B cell (primary cell): ENCODE measurements at regions of chr7 and their contacts with region 1.

Region 1: GRCh38 chr7:143299840-143300239 is 11.7 kb downstream of the CASP2 start:
- DNase-seq: peak; percentile 49
- ATAC-seq: peak; percentile 73
- H3K4me3 ChIP-seq: no peak overlapping the region
- H3K4me3 Mint-ChIP-seq: no peak overlapping the region
- H3K27ac ChIP-seq: no peak overlapping the region
- H3K27ac Mint-ChIP-seq: no peak overlapping the region
- H3K4me1 ChIP-seq: peaks cover 3 to 4% of the 10 kb centered on the region in 2 donors
- H3K4me1 Mint-ChIP-seq: peaks cover 30% of the 10 kb centered on the region
- H3K27me3 ChIP-seq: no peaks in the 10 kb centered on the region
- H3K27me3 Mint-ChIP-seq: no peaks in the 10 kb centered on the region
- CTCF ChIP-seq: peak; percentile 69

Region 2: GRCh38 chr7:142053988-142054387 is 1245.9 kb before region 1 on chr7:
- CTCF ChIA-PET with region 1: no interaction called
- POLR2A ChIA-PET with region 1: no interaction called
- intact Hi-C with region 1: no loop called
- DNase-seq: no peak
- ATAC-seq: no peak
- H3K4me3 ChIP-seq: no peak overlapping the region
- H3K4me3 Mint-ChIP-seq: no peak overlapping the region
- H3K27ac ChIP-seq: no peak overlapping the region
- H3K27ac Mint-ChIP-seq: no peak overlapping the region
- H3K4me1 ChIP-seq: no peaks in the 10 kb centered on the region
- H3K4me1 Mint-ChIP-seq: no peaks in the 10 kb centered on the region
- H3K27me3 ChIP-seq: no peaks in the 10 kb centered on the region
- H3K27me3 Mint-ChIP-seq: peaks cover 9% of the 10 kb centered on the region
- CTCF ChIP-seq: no peak

Region 3: DNA sequence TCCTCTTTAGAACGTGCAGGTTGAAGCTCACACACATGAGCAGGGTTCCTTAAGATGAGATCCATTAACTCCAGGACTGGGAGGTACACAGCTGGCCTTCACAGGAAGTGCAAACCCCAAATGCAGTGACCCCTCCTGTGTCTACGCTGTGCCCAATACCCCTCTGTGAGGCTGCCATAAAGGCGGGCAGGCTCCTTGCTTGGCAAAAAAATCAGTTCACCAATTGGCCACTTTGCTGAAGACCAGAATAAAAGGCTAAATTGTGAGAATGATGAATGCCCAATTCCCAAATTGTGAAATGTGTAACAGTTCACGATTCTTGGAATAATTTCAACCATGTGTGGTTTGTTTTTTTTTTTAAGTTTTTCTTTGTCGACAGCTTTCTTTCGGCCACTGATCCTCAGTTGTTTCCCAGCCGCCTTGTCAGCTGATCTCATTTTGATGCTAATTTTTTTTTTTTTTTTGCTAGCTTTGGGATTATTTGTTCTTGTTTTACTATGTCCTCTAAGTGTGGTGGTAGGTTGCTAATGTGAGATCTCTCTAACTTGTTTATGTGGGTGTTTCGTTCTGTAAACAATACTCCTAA is 940.1 kb before region 1 on chr7:
- CTCF ChIA-PET with region 1: no interaction called
- POLR2A ChIA-PET with region 1: no interaction called
- intact Hi-C with region 1: no loop called
- DNase-seq: no peak
- ATAC-seq: no peak
- H3K4me3 ChIP-seq: no peak overlapping the region
- H3K4me3 Mint-ChIP-seq: no peak overlapping the region
- H3K27ac ChIP-seq: no peak overlapping the region
- H3K27ac Mint-ChIP-seq: no peak overlapping the region
- H3K4me1 ChIP-seq: no peaks in the 10 kb centered on the region
- H3K4me1 Mint-ChIP-seq: no peaks in the 10 kb centered on the region
- H3K27me3 ChIP-seq: peaks cover 0 to 3% (median 0%) of the 10 kb centered on the region in 4 experiments
- H3K27me3 Mint-ChIP-seq: peaks cover 15% of the 10 kb centered on the region
- CTCF ChIP-seq: no peak

Region 4: GRCh38 chr7:143205560-143206293 is 94.1 kb before region 1 on chr7:
- CTCF ChIA-PET with region 1: no interaction called
- POLR2A ChIA-PET with region 1: no interaction called
- intact Hi-C with region 1: no loop called
- DNase-seq: peak; percentile 86
- ATAC-seq: peak; percentile 86
- H3K4me3 ChIP-seq: peak overlapping the region in 4 of 5 experiments; percentile 21 to 50 (median 34)
- H3K4me3 Mint-ChIP-seq: peak overlapping the region; percentile 63
- H3K27ac ChIP-seq: peak overlapping the region; percentile 0 to 64
- H3K27ac Mint-ChIP-seq: peak overlapping the region; percentile 59
- H3K4me1 ChIP-seq: peaks cover 25 to 29% of the 10 kb centered on the region in 2 donors
- H3K4me1 Mint-ChIP-seq: peaks cover 40% of the 10 kb centered on the region
- H3K27me3 ChIP-seq: no peaks in the 10 kb centered on the region
- H3K27me3 Mint-ChIP-seq: no peaks in the 10 kb centered on the region
- CTCF ChIP-seq: no peak

Region 5: GRCh38 chr7:143263266-143264195 is 36.3 kb before region 1 on chr7 and contains the start of gene GSTK1:
- CTCF ChIA-PET with region 1: interaction called, 10 read pairs
- POLR2A ChIA-PET with region 1: no interaction called
- intact Hi-C with region 1: loop called (anchors 5 kb)
- DNase-seq: peak; percentile 71
- ATAC-seq: peak; percentile 95
- H3K4me3 ChIP-seq: peak within 1 kb of the TSS; percentile 73 to 99 (median 90)
- H3K4me3 Mint-ChIP-seq: peak within 1 kb of the TSS; percentile 93
- H3K27ac ChIP-seq: peak within 1 kb of the TSS; percentile 80 to 82
- H3K27ac Mint-ChIP-seq: peak within 1 kb of the TSS; percentile 91
- H3K4me1 ChIP-seq: peaks cover 28 to 38% of the 10 kb centered on the region in 2 donors
- H3K4me1 Mint-ChIP-seq: peaks cover 52% of the 10 kb centered on the region
- H3K27me3 ChIP-seq: no peaks in the 10 kb centered on the region
- H3K27me3 Mint-ChIP-seq: no peaks in the 10 kb centered on the region
- CTCF ChIP-seq: no peak
- total RNA-seq, gene GSTK1: 181 and 183 TPM in 2 replicates

Region 6: DNA sequence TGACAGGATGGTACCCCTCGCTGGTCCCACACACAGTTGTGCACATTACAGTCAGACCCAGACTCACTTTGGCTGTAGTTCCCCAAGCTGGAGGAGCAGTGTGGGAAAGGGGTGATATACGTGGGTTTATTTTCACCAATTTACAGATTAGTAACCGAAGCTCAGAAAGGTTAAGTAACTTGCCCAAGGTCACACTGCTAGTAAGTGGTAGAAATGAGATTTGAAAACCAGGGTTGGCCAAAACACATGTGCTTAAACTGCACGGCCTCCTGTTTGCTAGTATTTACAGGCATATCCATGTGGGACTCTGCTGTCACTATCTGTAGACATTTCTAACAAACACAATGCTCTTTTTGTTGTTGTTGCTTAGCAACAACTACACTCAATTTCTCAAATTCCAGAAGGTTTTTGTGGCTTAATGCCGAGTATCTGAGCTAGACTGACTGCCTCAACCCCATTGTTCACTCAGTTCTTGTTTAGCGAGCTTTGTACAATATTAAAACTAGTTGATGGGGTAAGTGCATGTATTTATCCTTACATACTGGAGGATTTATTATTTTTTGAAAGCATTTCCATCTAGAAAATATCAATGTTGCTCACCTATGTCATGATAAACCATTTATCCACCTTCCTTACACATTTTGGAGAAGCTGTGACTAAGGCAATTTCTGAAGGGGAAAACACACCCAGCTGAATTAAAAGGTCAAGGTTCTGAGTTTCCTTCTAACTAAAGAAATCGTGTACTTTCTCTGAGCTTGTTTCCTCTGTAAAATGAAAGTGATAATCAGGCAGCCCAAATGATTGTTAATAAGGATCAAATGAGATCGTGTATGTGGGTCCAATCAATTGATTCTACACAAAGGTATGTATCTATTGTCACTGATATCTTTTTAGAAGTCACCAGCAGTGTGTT is 20.4 kb before region 1 on chr7:
- CTCF ChIA-PET with region 1: interaction called, 12 read pairs
- POLR2A ChIA-PET with region 1: no interaction called
- intact Hi-C with region 1: no loop called
- DNase-seq: no peak
- ATAC-seq: no peak
- H3K4me3 ChIP-seq: no peak overlapping the region
- H3K4me3 Mint-ChIP-seq: peak overlapping the region; percentile 68
- H3K27ac ChIP-seq: peak overlapping the region in 1 of 2 donors; percentile 53
- H3K27ac Mint-ChIP-seq: peak overlapping the region; percentile 28
- H3K4me1 ChIP-seq: peaks cover 18 to 25% of the 10 kb centered on the region in 2 donors
- H3K4me1 Mint-ChIP-seq: peaks cover 31% of the 10 kb centered on the region
- H3K27me3 ChIP-seq: no peaks in the 10 kb centered on the region
- H3K27me3 Mint-ChIP-seq: no peaks in the 10 kb centered on the region
- CTCF ChIP-seq: no peak

Region 7: GRCh38 chr7:143327903-143328302 is 28.1 kb after region 1 on chr7:
- CTCF ChIA-PET with region 1: interaction called, 10 read pairs
- POLR2A ChIA-PET with region 1: interaction called, 3 read pairs
- intact Hi-C with region 1: no loop called
- DNase-seq: peak; percentile 57
- ATAC-seq: peak; percentile 80
- H3K4me3 ChIP-seq: no peak overlapping the region
- H3K4me3 Mint-ChIP-seq: peak overlapping the region; percentile 60
- H3K27ac ChIP-seq: peak overlapping the region; percentile 25 to 40
- H3K27ac Mint-ChIP-seq: peak overlapping the region; percentile 78
- H3K4me1 ChIP-seq: peaks cover 18 to 36% of the 10 kb centered on the region in 2 donors
- H3K4me1 Mint-ChIP-seq: peaks cover 37% of the 10 kb centered on the region
- H3K27me3 ChIP-seq: peaks cover 0 to 2% (median 0%) of the 10 kb centered on the region in 4 experiments
- H3K27me3 Mint-ChIP-seq: no peaks in the 10 kb centered on the region
- CTCF ChIP-seq: no peak